ENCODE measurements at regions of chr1 and their contacts with region 1.

Region 1: GRCh38 chr1:192506741-192507155 is 68.8 kb upstream of the RGS1 start:
- DNase-seq: peak; percentile 43
- H3K4me3 Mint-ChIP-seq: no peak overlapping the region
- H3K27ac Mint-ChIP-seq: no peak overlapping the region
- H3K4me1 Mint-ChIP-seq: no peaks in the 10 kb centered on the region
- H3K27me3 Mint-ChIP-seq: no peaks in the 10 kb centered on the region
- CTCF ChIP-seq: peak; percentile 19

Region 2: DNA sequence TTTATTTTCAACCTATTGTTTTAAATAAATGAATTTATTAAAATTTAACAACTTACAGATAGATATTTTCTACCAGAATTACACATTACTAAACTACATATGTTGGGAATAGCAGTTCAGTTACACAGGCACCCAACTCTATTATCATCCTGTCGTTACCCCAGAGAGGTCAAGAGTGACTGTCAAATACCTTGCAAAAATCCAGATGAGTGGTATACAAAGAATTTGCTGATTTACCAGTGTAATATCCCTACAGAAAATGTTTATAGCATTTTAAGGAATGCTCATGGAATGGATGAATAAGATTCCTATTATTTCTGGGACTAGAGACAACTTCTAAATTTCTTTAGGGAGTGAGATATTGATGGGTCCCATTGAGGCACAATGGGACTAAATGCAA is 649.1 kb before region 1 on chr1:
- CTCF ChIA-PET with region 1: no interaction called
- intact Hi-C with region 1: no loop called
- DNase-seq: no peak
- H3K4me3 Mint-ChIP-seq: no peak overlapping the region
- H3K27ac Mint-ChIP-seq: no peak overlapping the region
- H3K4me1 Mint-ChIP-seq: no peaks in the 10 kb centered on the region
- H3K27me3 Mint-ChIP-seq: no peaks in the 10 kb centered on the region
- CTCF ChIP-seq: no peak

Region 3: GRCh38 chr1:192580351-192580962 is 73.7 kb after region 1 on chr1:
- CTCF ChIA-PET with region 1: no interaction called
- intact Hi-C with region 1: loop called (anchors 2 kb)
- DNase-seq: peak; percentile 42
- H3K4me3 Mint-ChIP-seq: no peak overlapping the region
- H3K27ac Mint-ChIP-seq: no peak overlapping the region
- H3K4me1 Mint-ChIP-seq: no peaks in the 10 kb centered on the region
- H3K27me3 Mint-ChIP-seq: no peaks in the 10 kb centered on the region
- CTCF ChIP-seq: no peak

Measured in Calu3 (cell line).